B cell (primary cell): ENCODE measurements at regions of chr19 and their contacts with region 1.

Region 1: DNA sequence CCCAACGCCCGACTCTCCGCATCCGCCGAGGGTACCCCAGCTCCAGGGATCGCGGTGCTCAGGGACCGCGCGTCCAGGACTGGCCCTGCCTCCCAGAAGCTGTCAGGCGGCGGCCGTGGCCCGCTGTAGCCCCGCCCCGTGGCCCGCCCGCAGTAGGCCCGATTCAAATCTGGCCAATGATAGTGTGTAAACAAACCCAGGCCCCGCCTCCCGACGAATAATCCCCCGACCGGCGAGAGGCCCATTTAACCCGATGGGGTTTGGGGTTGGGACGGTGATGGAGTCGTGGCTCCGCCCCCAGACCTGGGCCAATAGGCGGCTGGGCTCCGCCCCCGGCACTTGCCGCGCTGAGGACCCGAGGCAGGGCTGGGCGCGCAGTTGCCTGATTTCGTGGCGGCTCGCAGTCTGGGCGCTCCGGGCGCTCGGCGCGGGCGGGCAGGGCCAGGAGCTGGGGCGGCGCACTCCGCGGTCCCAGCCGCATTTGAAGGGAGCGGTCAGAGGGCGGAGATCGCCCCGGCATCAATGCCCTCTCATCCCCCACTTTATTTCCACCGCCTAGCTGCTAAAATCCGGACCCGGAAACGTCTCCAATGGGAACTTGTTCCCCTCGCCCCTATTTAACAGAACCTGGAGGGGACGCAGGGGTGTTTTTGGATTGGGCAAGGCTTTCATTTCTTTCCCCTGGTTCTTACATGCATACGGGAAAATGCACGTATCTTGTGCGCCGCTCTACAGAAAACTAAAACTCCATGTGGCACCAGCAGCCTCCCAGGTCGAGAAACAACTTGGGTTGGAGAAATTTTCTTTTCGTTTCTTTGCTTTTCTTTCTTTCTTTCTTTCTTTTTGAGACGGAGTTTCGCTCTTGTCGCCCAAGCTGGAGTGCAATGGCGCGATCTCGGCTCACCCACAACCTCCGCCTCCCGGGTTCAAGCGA is 8.4 kb upstream of the BICRA start:
- DNase-seq: peak; percentile 99
- ATAC-seq: peak; percentile 96
- H3K4me3 ChIP-seq: peak overlapping the region; percentile 63 to 79 (median 71)
- H3K4me3 Mint-ChIP-seq: peak overlapping the region; percentile 80
- H3K27ac ChIP-seq: peak overlapping the region; percentile 62 to 83
- H3K27ac Mint-ChIP-seq: peak overlapping the region; percentile 70
- H3K4me1 ChIP-seq: peaks cover 12 to 18% of the 10 kb centered on the region in 2 donors
- H3K4me1 Mint-ChIP-seq: peaks cover 11% of the 10 kb centered on the region
- H3K27me3 ChIP-seq: peaks cover 0 to 28% (median 3%) of the 10 kb centered on the region in 4 experiments
- H3K27me3 Mint-ChIP-seq: peaks cover 21% of the 10 kb centered on the region
- CTCF ChIP-seq: no peak

Region 2: GRCh38 chr19:47483800-47484690 is 116.5 kb before region 1 on chr19 and contains the start of gene KPTN:
- CTCF ChIA-PET with region 1: interaction called, 3 read pairs
- POLR2A ChIA-PET with region 1: interaction called, 4 read pairs
- intact Hi-C with region 1: loop called (anchors 10 kb)
- DNase-seq: peak; percentile 95
- ATAC-seq: peak; percentile 85
- H3K4me3 ChIP-seq: peak within 1 kb of the TSS; percentile 62 to 84 (median 81)
- H3K4me3 Mint-ChIP-seq: peak within 1 kb of the TSS; percentile 96
- H3K27ac ChIP-seq: peak within 1 kb of the TSS; percentile 79 to 86
- H3K27ac Mint-ChIP-seq: peak within 1 kb of the TSS; percentile 99
- H3K4me1 ChIP-seq: peaks cover 33 to 44% of the 10 kb centered on the region in 2 donors
- H3K4me1 Mint-ChIP-seq: peaks cover 41% of the 10 kb centered on the region
- H3K27me3 ChIP-seq: no peaks in the 10 kb centered on the region
- H3K27me3 Mint-ChIP-seq: no peaks in the 10 kb centered on the region
- CTCF ChIP-seq: peak; percentile 84
- total RNA-seq, gene KPTN: 8.1 and 11.7 TPM in 2 replicates